Caco-2 (cell line): ENCODE measurements at regions of chr3 and their contacts with region 1.

Region 1: GRCh38 chr3:188954590-188955208 is 217.1 kb upstream of the TPRG1 start:
- DNase-seq: peak; percentile 77 to 88
- H3K4me3 ChIP-seq: no peak overlapping the region
- H3K4me3 Mint-ChIP-seq: no peak overlapping the region
- H3K27ac Mint-ChIP-seq: no peak overlapping the region
- H3K4me1 ChIP-seq: peaks cover 20% of the 10 kb centered on the region
- H3K4me1 Mint-ChIP-seq: peaks cover 12% of the 10 kb centered on the region
- H3K27me3 ChIP-seq: no peaks in the 10 kb centered on the region
- H3K27me3 Mint-ChIP-seq: no peaks in the 10 kb centered on the region
- CTCF ChIP-seq: peak; percentile 91

Region 2: DNA sequence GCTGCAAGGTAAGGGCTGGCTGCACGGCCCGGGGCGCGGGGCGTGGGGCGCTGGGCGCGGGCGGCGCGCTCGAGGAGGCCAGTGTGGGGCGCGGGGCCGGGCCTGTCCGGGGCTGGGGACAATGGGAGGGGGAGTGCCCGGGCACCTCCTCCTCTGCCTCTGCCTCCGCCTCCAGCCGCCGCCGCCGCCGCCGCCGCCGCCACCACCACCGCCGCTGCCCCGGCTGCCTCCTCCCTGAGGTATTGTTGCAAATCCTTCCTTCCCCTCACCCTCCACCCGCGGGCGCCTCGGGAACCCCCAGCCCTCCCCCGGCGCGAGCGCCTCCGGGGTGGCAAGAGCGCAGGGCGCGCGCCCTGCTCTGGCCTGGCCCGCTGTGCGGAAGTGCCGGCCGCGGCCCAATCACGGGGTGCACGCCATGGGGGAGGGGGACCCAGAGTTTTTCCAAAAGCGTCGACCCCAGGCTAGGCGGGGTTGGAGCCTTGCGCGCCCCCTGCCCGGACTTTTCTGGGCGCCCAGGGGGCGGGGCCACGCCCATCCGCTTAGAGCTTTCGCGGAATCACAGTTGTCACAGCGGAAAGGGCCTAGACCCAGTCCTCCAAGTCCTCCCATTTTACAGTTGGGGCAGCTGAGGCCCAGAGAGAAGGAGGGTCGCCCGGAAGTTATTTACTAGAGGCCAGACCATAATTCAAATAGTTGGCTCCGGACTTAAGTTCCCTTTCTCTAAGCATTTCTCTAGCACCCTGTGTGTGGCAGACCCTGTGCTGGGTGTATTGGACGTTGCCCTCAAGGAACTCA is 800.5 kb before region 1 on chr3 and contains the start of gene LPP:
- CTCF ChIA-PET with region 1: no interaction called
- POLR2A ChIA-PET with region 1: interaction called, 5 read pairs
- intact Hi-C with region 1: loop called (anchors 10 kb)
- DNase-seq: peak; percentile 79 to 86
- H3K4me3 ChIP-seq: peak within 1 kb of the TSS; percentile 68
- H3K4me3 Mint-ChIP-seq: peak within 1 kb of the TSS; percentile 84
- H3K27ac Mint-ChIP-seq: peak within 1 kb of the TSS; percentile 89
- H3K4me1 ChIP-seq: peaks cover 66% of the 10 kb centered on the region
- H3K4me1 Mint-ChIP-seq: peaks cover 48% of the 10 kb centered on the region
- H3K27me3 ChIP-seq: no peaks in the 10 kb centered on the region
- H3K27me3 Mint-ChIP-seq: no peaks in the 10 kb centered on the region
- CTCF ChIP-seq: peak in 1 of 2 experiments; percentile 27
- total RNA-seq, gene LPP: 120 and 147 TPM in 2 replicates

Region 3: GRCh38 chr3:188389711-188390342 is 564.9 kb before region 1 on chr3:
- CTCF ChIA-PET with region 1: no interaction called
- POLR2A ChIA-PET with region 1: no interaction called
- intact Hi-C with region 1: loop called (anchors 5 kb)
- DNase-seq: no peak
- H3K4me3 ChIP-seq: no peak overlapping the region
- H3K4me3 Mint-ChIP-seq: no peak overlapping the region
- H3K27ac Mint-ChIP-seq: peak overlapping the region; percentile 73
- H3K4me1 ChIP-seq: peaks cover 39% of the 10 kb centered on the region
- H3K4me1 Mint-ChIP-seq: peaks cover 32% of the 10 kb centered on the region
- H3K27me3 ChIP-seq: no peaks in the 10 kb centered on the region
- H3K27me3 Mint-ChIP-seq: no peaks in the 10 kb centered on the region
- CTCF ChIP-seq: no peak

Region 4: GRCh38 chr3:188830893-188831292 is 123.8 kb before region 1 on chr3:
- CTCF ChIA-PET with region 1: no interaction called
- POLR2A ChIA-PET with region 1: no interaction called
- intact Hi-C with region 1: loop called (anchors 2 kb)
- DNase-seq: no peak
- H3K4me3 ChIP-seq: no peak overlapping the region
- H3K4me3 Mint-ChIP-seq: no peak overlapping the region
- H3K27ac Mint-ChIP-seq: no peak overlapping the region
- H3K4me1 ChIP-seq: peaks cover 8% of the 10 kb centered on the region; the same call in 1 of the 2 replicates
- H3K4me1 Mint-ChIP-seq: peaks cover 18% of the 10 kb centered on the region
- H3K27me3 ChIP-seq: no peaks in the 10 kb centered on the region
- H3K27me3 Mint-ChIP-seq: no peaks in the 10 kb centered on the region
- CTCF ChIP-seq: peak in 1 of 2 experiments; percentile 22

Region 5: DNA sequence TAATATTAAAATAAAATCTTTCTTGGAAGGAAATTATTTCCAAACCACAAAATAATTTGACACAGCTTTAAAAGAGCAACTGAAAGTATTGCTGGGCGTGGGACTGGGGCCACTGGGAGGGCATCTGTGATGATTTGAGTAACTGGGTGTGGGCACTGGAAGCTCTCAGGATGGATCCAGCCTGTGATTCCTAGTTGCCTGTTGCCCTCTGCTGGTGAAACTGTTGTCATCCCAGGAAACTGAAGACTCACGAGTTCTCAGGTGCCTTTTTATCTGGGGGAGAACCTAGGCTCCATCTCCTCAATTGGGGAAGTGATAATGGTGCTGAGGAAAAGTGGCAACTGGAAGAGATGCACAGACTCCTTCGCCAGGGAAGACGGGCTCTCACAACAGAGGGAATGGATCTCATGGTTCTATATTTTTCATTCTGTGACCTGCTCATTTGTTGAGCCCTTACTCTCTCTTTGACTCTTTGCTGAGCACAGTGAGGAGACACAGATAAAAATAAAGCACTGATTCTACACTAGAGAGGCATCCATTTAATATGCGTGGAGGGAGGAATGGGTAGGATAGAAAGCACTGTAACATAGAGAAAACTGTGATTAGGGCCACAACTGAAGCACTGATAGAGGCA is 278.6 kb after region 1 on chr3:
- CTCF ChIA-PET with region 1: no interaction called
- POLR2A ChIA-PET with region 1: no interaction called
- intact Hi-C with region 1: loop called (anchors 2 kb)
- DNase-seq: peak; percentile 68 to 70
- H3K4me3 ChIP-seq: no peak overlapping the region
- H3K4me3 Mint-ChIP-seq: no peak overlapping the region
- H3K27ac Mint-ChIP-seq: no peak overlapping the region
- H3K4me1 ChIP-seq: peaks cover 8% of the 10 kb centered on the region; the same call in 1 of the 2 replicates
- H3K4me1 Mint-ChIP-seq: peaks cover 14% of the 10 kb centered on the region
- H3K27me3 ChIP-seq: no peaks in the 10 kb centered on the region
- H3K27me3 Mint-ChIP-seq: no peaks in the 10 kb centered on the region
- CTCF ChIP-seq: peak; percentile 79 to 81